ENCODE measurements at regions of chr5 and their contacts with region 1.

Region 1: GRCh38 chr5:31809050-31809870 is 170.3 kb downstream of the PDZD2 start:
- DNase-seq: peak; percentile 81 to 83
- ATAC-seq: peak; percentile 92 to 97
- H3K4me3 ChIP-seq: no peak overlapping the region
- H3K27ac ChIP-seq: peak overlapping the region in 1 of 2 experiments; percentile 25; a peak in 3 of 6 replicates
- H3K4me1 ChIP-seq: peaks cover 16% of the 10 kb centered on the region
- CTCF ChIP-seq: peak; percentile 86
- EP300 ChIP-seq: no peak
- POLR2A ChIP-seq: no peak
- RAD21 ChIP-seq: peak; percentile 86 to 88

Region 2: GRCh38 chr5:31581498-31582099 is 227.7 kb before region 1 on chr5:
- CTCF ChIA-PET with region 1: interaction called, 26 read pairs
- POLR2A ChIA-PET with region 1: no interaction called
- DNase-seq: peak in 1 of 2 experiments; percentile 46
- ATAC-seq: peak in 1 of 2 experiments; percentile 54; a peak in 3 of 6 replicates
- H3K4me3 ChIP-seq: no peak overlapping the region
- H3K27ac ChIP-seq: no peak overlapping the region
- H3K4me1 ChIP-seq: 0 out of 3 replicates have a peak, but pooled peaks cover 3% of the 10 kb centered on the region
- CTCF ChIP-seq: peak; percentile 78
- EP300 ChIP-seq: no peak
- POLR2A ChIP-seq: no peak
- RAD21 ChIP-seq: peak; percentile 76 to 87

Region 3: DNA sequence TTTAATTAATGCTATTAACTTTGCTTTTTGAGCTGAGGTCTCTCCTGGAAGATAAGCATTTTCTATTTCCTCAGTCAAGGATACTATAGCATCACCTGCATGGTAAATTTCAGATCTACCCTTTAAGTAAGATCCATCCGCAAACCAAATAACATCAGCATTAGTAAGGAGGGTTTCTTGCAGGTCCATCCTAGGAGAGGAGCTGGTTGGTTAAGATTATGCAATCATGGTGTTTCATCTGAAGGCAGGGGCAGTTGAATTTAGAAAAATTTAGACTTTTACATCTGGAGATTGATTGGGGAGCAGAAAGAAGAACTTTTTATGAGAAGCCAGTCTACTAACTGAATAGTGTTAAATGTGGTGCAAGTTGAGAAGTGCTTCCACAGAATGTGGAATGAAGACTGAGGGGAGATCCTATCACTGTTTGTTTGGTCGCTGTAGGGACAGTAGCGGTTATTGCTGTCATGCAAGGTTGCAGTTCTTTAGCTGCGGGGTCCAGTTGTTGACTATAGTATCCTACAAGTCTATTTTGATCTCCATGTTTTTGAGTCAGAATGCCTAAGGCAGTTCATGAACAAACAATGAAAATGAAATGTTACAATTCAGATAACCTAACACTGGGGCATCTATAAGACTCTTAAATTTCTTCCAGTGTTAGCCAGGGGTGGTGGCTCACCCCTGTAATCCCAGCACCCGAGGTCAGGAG is 215.7 kb before region 1 on chr5:
- CTCF ChIA-PET with region 1: interaction called, 23 read pairs
- POLR2A ChIA-PET with region 1: no interaction called
- DNase-seq: no peak
- ATAC-seq: no peak
- H3K4me3 ChIP-seq: no peak overlapping the region
- H3K27ac ChIP-seq: no peak overlapping the region
- H3K4me1 ChIP-seq: no peaks in the 10 kb centered on the region
- CTCF ChIP-seq: no peak
- EP300 ChIP-seq: no peak
- POLR2A ChIP-seq: no peak
- RAD21 ChIP-seq: no peak

Region 4: GRCh38 chr5:31786090-31786631 is 23.1 kb before region 1 on chr5:
- CTCF ChIA-PET with region 1: interaction called, 13 read pairs
- POLR2A ChIA-PET with region 1: no interaction called
- DNase-seq: no peak
- ATAC-seq: no peak
- H3K4me3 ChIP-seq: no peak overlapping the region
- H3K27ac ChIP-seq: no peak overlapping the region
- H3K4me1 ChIP-seq: no peaks in the 10 kb centered on the region
- CTCF ChIP-seq: no peak
- EP300 ChIP-seq: no peak
- POLR2A ChIP-seq: no peak
- RAD21 ChIP-seq: no peak

Region 5: GRCh38 chr5:31794009-31794408 is 15.3 kb before region 1 on chr5:
- CTCF ChIA-PET with region 1: interaction called, 18 read pairs
- POLR2A ChIA-PET with region 1: no interaction called
- DNase-seq: no peak
- ATAC-seq: no peak
- H3K4me3 ChIP-seq: no peak overlapping the region
- H3K27ac ChIP-seq: no peak overlapping the region
- H3K4me1 ChIP-seq: no peaks in the 10 kb centered on the region
- CTCF ChIP-seq: no peak
- EP300 ChIP-seq: no peak
- POLR2A ChIP-seq: no peak
- RAD21 ChIP-seq: no peak

Region 6: DNA sequence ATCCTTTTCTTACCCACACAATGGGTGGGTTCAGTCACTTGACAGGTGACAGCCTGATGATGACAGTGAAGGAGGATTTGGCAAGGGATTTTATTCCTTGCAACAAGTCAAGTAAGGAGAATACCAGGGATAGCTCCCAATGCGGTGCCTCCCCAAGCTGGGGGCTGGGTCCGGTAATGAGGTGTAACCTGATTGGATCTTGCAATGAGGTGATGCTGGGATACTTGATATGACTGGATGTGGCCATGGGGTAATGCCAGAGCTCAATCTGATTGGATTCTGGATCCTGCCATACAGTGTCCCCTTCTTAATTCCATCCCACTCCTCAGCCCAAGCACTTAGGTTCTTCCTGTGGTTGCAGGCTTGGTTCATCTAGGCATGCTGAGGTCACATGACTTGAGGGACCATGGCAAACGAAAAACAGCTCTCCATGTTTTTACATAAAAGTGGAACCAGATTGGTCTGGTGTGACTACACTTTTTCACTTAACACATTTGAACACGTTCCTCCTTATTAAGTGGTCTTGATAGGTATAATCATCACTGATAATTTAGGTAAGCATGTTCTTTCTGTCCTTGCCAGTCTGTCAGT is 10.8 kb after region 1 on chr5:
- CTCF ChIA-PET with region 1: interaction called, 41 read pairs
- POLR2A ChIA-PET with region 1: no interaction called
- DNase-seq: peak in 1 of 2 experiments; percentile 23
- ATAC-seq: peak in 1 of 2 experiments; percentile 56; a peak in 3 of 6 replicates
- H3K4me3 ChIP-seq: no peak overlapping the region
- H3K27ac ChIP-seq: no peak overlapping the region
- H3K4me1 ChIP-seq: no peaks in the 10 kb centered on the region
- CTCF ChIP-seq: no peak
- EP300 ChIP-seq: no peak
- POLR2A ChIP-seq: no peak
- RAD21 ChIP-seq: no peak

Region 7: GRCh38 chr5:32027717-32028321 is 218.6 kb after region 1 on chr5:
- CTCF ChIA-PET with region 1: no interaction called
- POLR2A ChIA-PET with region 1: no interaction called
- DNase-seq: peak; percentile 47 to 73
- ATAC-seq: peak; percentile 92 to 93
- H3K4me3 ChIP-seq: no peak overlapping the region
- H3K27ac ChIP-seq: peak overlapping the region; percentile 75
- H3K4me1 ChIP-seq: peaks cover 34% of the 10 kb centered on the region
- CTCF ChIP-seq: no peak
- EP300 ChIP-seq: peak in 1 of 2 experiments; percentile 47; a peak in 1 of 5 replicates
- POLR2A ChIP-seq: no peak
- RAD21 ChIP-seq: 0 out of 5 replicates have a peak, but pooled peaks of 1 of the 2 experiments have one; percentile 17

Region 8: DNA sequence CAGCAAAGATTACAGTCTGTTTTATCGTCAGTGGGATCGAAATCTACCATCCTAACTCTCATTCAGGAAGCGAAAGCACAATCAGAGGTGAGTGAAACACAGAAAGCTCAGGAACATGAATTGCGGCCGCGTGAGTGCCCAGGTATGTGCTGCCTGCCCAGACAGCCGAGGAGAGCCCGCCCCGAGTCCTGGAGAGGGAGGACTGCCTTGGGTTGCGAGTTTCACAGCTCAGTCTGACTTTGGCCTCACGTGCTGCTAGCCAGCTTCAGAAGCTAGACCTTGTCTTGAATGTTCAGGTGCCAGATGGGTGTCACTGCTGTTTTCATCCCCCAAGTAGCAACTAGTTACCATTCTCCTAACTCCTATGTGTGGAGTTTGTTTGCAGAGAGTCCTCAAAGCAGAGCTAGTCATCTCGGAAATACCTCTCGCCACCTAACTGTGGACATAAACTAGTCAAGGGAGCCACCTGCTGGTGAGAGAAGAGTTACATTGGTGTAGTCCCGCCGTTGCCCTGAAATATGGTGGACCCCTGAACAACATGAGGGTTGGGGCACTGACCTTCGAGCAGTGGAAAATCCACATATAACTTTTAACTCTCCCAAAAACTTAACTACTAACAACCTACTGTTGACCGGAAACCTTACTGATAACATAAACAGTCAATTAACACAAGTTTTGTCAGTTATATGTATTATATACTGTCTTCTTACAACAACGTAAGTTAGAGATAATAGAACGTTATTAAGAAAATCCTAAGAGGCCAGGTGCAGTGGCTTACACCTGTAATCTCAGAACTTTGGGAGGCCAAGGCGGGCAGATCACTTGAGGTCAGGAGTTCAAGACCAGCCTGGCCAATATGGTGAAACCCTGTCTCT is 283.9 kb after region 1 on chr5:
- CTCF ChIA-PET with region 1: interaction called, 10 read pairs
- POLR2A ChIA-PET with region 1: no interaction called
- DNase-seq: peak; percentile 77 to 78
- ATAC-seq: peak; percentile 96
- H3K4me3 ChIP-seq: no peak overlapping the region
- H3K27ac ChIP-seq: no peak overlapping the region
- H3K4me1 ChIP-seq: 0 out of 3 replicates have a peak, but pooled peaks cover 3% of the 10 kb centered on the region
- CTCF ChIP-seq: peak; percentile 88
- EP300 ChIP-seq: no peak
- POLR2A ChIP-seq: no peak
- RAD21 ChIP-seq: peak; percentile 90 to 94

Measured in A549 (cell line).